A673 (cell line): ENCODE measurements at regions of chr5 and their contacts with region 1.

Region 1: DNA sequence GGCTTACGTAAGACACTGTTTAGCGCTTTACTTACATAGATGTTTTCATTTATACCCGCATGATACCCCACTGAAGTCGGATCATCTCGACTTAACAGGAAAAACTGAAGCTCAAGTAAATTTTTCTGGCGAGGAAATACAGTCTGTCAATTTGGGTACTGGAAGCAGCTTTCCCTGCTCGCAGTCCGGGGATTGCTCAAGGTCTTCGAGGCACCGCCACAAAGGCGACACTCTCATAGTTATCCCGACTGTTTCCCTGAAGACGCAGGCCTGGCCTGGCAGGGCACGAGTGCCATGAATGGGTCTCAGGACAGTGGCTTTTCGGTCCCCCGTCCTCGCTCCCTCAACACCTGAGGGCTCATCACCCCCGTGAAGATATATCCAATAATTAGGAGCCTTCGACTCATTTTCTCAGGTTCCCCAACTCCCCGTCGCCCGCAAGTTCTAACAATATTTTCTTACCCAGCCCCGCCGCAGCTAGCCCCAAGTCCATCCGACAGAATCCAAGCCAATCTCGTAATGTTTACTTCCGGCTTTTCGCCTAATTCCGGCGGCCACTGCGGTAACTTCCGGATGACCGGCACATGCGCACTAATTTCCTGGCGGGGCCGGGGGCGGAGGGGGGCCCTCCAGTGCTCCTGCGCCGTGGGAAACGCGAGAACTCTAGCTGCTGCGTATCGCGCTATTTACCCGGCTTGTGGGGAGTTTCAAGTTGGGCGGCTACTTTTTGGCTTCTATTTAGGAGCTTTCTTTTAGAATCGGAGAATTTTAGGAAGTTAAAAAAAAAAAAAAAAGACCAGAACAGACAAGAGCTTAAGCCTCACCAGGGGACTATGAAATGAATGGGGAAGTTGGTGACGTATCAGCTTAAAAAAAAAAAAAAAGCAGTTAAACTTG is at the start of gene SLU7:
- DNase-seq: peak; percentile 96
- H3K4me3 ChIP-seq: peak within 1 kb of the TSS; percentile 82
- H3K27ac ChIP-seq: peak within 1 kb of the TSS; percentile 85
- H3K4me1 ChIP-seq: peaks cover 26% of the 10 kb centered on the region
- H3K27me3 ChIP-seq: no peaks in the 10 kb centered on the region
- CTCF ChIP-seq: no peak
- total RNA-seq, gene SLU7: 37.4 and 43.1 TPM in 2 replicates

Region 2: GRCh38 chr5:160165137-160166068 is 253.4 kb before region 1 on chr5:
- CTCF ChIA-PET with region 1: no interaction called
- POLR2A ChIA-PET with region 1: interaction called, 13 read pairs
- intact Hi-C with region 1: no loop called
- DNase-seq: peak; percentile 73
- H3K4me3 ChIP-seq: no peak overlapping the region
- H3K27ac ChIP-seq: peak overlapping the region; percentile 80
- H3K4me1 ChIP-seq: peaks cover 22% of the 10 kb centered on the region
- H3K27me3 ChIP-seq: no peaks in the 10 kb centered on the region
- CTCF ChIP-seq: no peak